Tibial artery (tissue), 4 donors: ENCODE measurements at regions of chr16 and their contacts with region 1.

Region 1: GRCh38 chr16:3305109-3306068 is at the starts of genes TIGD7 and ZNF75A:
- DNase-seq: peak; percentile 72 to 87
- H3K4me3 ChIP-seq: peak within 1 kb of the TSS; percentile 70 to 79
- H3K27ac ChIP-seq: peak within 1 kb of the TSS; percentile 87 to 88
- H3K4me1 ChIP-seq: peaks cover 0 to 23% (median 11%) of the 10 kb centered on the region in 4 donors
- H3K27me3 ChIP-seq: no peaks in the 10 kb centered on the region
- CTCF ChIP-seq: peak; percentile 19 to 21

Region 2: GRCh38 chr16:2388875-2389433 is 916.4 kb before region 1 on chr16:
- intact Hi-C with region 1: no loop called
- DNase-seq: no peak
- H3K4me3 ChIP-seq: no peak overlapping the region
- H3K27ac ChIP-seq: no peak overlapping the region
- H3K4me1 ChIP-seq: no peaks in the 10 kb centered on the region
- H3K27me3 ChIP-seq: peaks cover 0 to 7% of the 10 kb centered on the region in 2 donors
- CTCF ChIP-seq: no peak

Region 3: DNA sequence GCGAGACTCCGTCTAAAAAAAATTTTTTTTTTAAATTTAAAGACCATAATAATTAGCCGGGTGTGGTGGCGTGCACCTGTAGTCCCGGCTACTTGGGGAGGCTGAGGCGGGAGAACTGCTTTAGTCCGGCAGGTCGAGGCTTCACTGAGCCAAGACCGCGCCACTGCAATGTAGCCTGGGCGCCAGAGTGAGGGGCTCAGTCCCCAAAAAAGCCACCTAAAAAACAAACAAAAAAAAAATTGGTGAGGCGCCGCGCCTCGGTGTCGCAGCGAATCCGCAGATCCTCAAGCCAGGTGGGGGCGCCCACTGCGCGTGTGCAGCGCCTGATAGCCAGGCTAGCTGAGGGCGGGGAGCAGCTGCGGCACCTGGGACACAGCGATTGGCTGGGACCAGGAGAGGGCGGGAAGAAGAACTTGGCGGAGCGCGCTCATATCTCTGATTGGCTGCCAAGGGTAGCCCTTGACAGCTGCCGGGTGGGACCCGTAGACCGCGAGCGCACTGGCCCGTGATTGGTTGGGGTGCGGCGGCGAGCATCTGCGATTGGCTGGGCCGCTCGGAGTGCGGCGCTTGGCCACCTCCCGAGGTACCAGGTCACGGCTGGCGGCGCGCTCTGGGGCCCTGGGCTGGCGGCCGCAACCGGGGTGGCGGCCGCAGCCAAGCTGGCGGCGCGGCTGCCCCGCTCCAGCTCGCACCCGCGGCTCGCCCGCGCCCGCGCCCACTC is 301.6 kb before region 1 on chr16:
- intact Hi-C with region 1: no loop called
- DNase-seq: peak; percentile 91 to 97
- H3K4me3 ChIP-seq: peak overlapping the region; percentile 19 to 35
- H3K27ac ChIP-seq: no peak overlapping the region
- H3K4me1 ChIP-seq: peaks cover 0 to 5% (median 4%) of the 10 kb centered on the region in 4 donors
- H3K27me3 ChIP-seq: peaks cover 0 to 64% of the 10 kb centered on the region in 2 donors
- CTCF ChIP-seq: peak; percentile 40 to 51

Region 4: DNA sequence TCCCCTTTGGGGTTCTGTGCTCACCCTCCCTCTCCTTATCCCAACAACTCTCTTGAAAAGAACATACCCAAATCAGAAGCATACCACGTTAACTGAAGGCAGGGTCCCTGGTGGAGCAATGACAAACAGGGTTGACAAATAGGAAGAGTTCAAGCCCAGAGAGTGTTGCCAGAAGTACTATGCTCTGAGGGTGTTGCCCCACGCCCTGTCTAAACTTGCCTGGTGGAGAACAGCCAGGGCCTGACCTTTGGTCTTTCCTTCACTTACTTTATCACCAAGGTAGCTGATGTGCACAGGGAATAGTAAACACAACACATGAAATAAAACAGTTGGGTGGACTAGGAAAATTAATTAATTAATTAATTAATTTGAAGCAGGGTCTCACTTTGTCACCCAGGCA is 23.3 kb after region 1 on chr16:
- intact Hi-C with region 1: no loop called
- DNase-seq: no peak
- H3K4me3 ChIP-seq: no peak overlapping the region
- H3K27ac ChIP-seq: no peak overlapping the region
- H3K4me1 ChIP-seq: no peaks in the 10 kb centered on the region
- H3K27me3 ChIP-seq: no peaks in the 10 kb centered on the region
- CTCF ChIP-seq: no peak

Region 5: GRCh38 chr16:3389663-3390338 is 84.4 kb after region 1 on chr16:
- intact Hi-C with region 1: loop called (anchors 10 kb)
- DNase-seq: no peak
- H3K4me3 ChIP-seq: no peak overlapping the region
- H3K27ac ChIP-seq: no peak overlapping the region
- H3K4me1 ChIP-seq: no peaks in the 10 kb centered on the region
- H3K27me3 ChIP-seq: no peaks in the 10 kb centered on the region
- CTCF ChIP-seq: no peak